ENCODE measurements at regions of chr7 and their contacts with region 1.

Region 1: DNA sequence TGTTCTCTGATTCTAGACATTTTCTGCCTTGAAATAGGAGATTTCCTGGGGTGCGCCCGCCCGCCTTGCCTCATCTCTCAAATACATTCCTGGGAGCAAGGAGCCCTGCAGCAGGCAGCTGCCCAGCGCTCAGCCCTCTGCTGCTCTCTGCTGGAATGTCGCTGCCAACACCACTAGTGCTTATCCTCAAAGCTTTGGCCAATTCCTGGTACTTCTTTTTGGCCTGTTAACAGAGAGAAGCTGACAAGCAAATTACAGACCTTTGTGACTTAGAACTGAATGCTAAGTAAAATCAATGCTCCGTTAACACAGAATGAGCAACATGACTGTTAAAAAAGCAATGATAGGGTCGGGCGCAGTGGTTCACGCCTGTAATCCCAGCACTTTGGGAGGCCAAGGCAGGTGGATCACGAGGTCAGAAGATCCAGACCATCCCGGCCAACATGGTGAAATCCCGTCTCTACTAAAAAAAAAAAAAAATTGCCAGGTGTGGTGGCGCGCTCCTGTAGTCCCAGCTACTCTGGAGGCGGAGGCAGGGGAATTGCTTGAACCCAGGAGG is 41.9 kb upstream of the SYPL1 start:
- DNase-seq: peak; percentile 79
- ATAC-seq: peak; percentile 98
- H3K4me3 Mint-ChIP-seq: no peak overlapping the region
- H3K27ac Mint-ChIP-seq: no peak overlapping the region
- H3K4me1 Mint-ChIP-seq: peaks cover 5% of the 10 kb centered on the region
- H3K27me3 Mint-ChIP-seq: peaks cover 15% of the 10 kb centered on the region
- CTCF ChIP-seq: peak; percentile 94

Region 2: DNA sequence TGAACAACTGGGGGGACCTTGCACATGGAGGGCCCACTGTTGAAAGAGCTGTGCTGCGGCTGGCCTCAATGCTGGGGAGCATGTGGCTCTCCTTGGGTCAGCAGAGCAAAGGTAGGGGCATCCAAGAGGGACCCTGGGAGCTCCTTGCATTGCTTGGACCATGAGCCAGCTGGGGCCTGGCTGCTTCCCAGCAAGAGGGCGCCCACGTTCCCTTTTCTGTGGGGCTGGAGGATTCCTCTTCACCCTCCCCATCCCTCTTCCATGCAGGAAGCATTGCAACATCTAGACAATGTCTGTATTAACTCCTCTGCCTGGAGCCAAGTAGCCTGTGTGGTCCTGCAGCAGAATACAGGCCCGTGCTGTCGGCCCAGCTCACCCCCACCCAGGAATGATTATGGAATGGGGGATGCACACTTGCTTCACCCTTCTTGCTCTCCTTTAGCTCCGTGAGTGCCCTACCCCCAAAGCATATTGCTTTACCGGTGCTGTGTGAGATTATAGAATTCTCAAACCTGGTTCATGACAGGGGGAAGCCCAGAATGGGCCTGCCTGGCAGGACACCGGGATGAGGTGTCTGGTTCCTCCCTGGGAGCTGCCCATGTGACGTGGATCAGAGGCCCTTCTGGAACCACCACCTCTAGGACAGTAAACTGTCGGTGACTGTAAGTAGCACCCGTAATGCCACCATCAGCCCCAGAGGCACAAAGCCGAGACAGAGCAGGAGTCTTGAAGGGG is 103.8 kb before region 1 on chr7:
- CTCF ChIA-PET with region 1: interaction called, 195 read pairs
- POLR2A ChIA-PET with region 1: interaction called, 3 read pairs
- intact Hi-C with region 1: no loop called
- DNase-seq: no peak
- ATAC-seq: no peak
- H3K4me3 Mint-ChIP-seq: no peak overlapping the region
- H3K27ac Mint-ChIP-seq: no peak overlapping the region
- H3K4me1 Mint-ChIP-seq: no peaks in the 10 kb centered on the region
- H3K27me3 Mint-ChIP-seq: no peaks in the 10 kb centered on the region
- CTCF ChIP-seq: no peak

Region 3: DNA sequence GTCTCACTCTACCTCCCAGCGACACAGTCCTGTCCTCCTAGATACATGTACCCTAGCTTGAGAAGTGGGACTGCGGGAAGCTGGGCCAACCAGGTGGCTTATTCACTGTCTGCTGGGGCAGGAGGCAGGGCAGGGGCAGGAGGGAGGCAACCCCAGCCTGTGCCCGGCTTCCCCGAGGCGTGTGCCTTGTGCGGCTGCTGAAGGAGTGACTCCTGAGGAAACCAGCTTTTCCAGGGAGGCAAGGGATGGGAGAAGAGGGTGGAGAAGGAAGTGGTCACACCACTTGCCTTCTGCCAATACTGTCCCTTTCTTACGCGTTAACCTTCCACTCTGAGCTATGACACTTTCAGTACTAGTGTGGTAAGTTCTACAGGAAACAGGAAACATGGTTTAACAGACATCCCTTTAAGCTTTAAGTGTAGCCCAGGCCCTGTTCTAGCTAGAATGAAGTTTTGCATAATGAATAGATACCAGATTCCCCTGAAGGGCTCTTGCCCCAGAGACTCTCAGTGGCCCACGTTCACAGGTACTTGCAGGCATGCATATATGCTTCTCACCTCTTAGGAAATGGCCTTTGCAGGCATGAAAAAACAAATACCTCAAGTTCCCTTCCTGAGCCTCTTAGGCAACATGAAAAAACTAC is 82.5 kb before region 1 on chr7:
- CTCF ChIA-PET with region 1: interaction called, 11 read pairs
- POLR2A ChIA-PET with region 1: interaction called, 3 read pairs
- intact Hi-C with region 1: no loop called
- DNase-seq: peak; percentile 76
- ATAC-seq: peak; percentile 95
- H3K4me3 Mint-ChIP-seq: peak overlapping the region; percentile 72
- H3K27ac Mint-ChIP-seq: peak overlapping the region; percentile 97
- H3K4me1 Mint-ChIP-seq: peaks cover 55% of the 10 kb centered on the region
- H3K27me3 Mint-ChIP-seq: no peaks in the 10 kb centered on the region
- CTCF ChIP-seq: no peak

Region 4: DNA sequence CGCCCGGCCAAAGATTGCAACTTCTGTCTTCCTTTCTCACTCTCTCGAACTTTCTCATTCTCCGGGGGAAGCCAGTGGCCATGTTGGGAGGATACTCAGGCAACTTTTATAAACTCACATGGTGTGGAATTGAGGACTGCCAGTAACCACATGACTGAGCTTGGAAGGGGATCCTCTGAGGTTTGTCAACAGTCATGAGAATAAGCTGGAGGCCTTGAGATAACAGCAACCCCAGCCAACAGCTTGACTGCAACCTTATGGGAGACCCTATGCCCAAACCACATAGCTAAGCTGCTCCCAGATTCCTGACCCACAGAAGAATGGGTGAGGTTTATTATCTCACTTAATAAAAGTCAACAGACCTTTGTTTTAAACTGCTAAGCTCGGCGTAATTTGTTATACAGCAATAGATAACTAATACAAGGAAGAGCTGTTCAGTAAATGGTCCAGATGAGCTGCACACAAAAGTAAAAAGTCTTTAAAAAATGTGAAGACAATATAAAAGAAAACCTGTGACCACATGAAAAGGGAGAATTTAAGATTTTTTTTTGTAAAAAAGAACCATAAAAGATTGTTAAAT is 51.5 kb before region 1 on chr7:
- CTCF ChIA-PET with region 1: interaction called, 12 read pairs
- POLR2A ChIA-PET with region 1: no interaction called
- intact Hi-C with region 1: no loop called
- DNase-seq: no peak
- ATAC-seq: no peak
- H3K4me3 Mint-ChIP-seq: no peak overlapping the region
- H3K27ac Mint-ChIP-seq: no peak overlapping the region
- H3K4me1 Mint-ChIP-seq: peaks cover 68% of the 10 kb centered on the region
- H3K27me3 Mint-ChIP-seq: no peaks in the 10 kb centered on the region
- CTCF ChIP-seq: no peak

Region 5: GRCh38 chr7:106134241-106134640 is 19.7 kb before region 1 on chr7:
- CTCF ChIA-PET with region 1: interaction called, 21 read pairs
- POLR2A ChIA-PET with region 1: no interaction called
- intact Hi-C with region 1: no loop called
- DNase-seq: no peak
- ATAC-seq: no peak
- H3K4me3 Mint-ChIP-seq: no peak overlapping the region
- H3K27ac Mint-ChIP-seq: no peak overlapping the region
- H3K4me1 Mint-ChIP-seq: no peaks in the 10 kb centered on the region
- H3K27me3 Mint-ChIP-seq: peaks cover 1% of the 10 kb centered on the region
- CTCF ChIP-seq: no peak

Region 6: GRCh38 chr7:106166655-106167342 is 12.8 kb after region 1 on chr7:
- CTCF ChIA-PET with region 1: interaction called, 114 read pairs
- POLR2A ChIA-PET with region 1: interaction called, 3 read pairs
- intact Hi-C with region 1: no loop called
- DNase-seq: peak; percentile 53
- ATAC-seq: peak; percentile 75
- H3K4me3 Mint-ChIP-seq: no peak overlapping the region
- H3K27ac Mint-ChIP-seq: no peak overlapping the region
- H3K4me1 Mint-ChIP-seq: peaks cover 2% of the 10 kb centered on the region
- H3K27me3 Mint-ChIP-seq: peaks cover 1% of the 10 kb centered on the region
- CTCF ChIP-seq: peak; percentile 97

Region 7: GRCh38 chr7:106190589-106191330 is 36.8 kb after region 1 on chr7:
- CTCF ChIA-PET with region 1: no interaction called
- POLR2A ChIA-PET with region 1: no interaction called
- intact Hi-C with region 1: no loop called
- DNase-seq: no peak
- ATAC-seq: no peak
- H3K4me3 Mint-ChIP-seq: no peak overlapping the region
- H3K27ac Mint-ChIP-seq: no peak overlapping the region
- H3K4me1 Mint-ChIP-seq: no peaks in the 10 kb centered on the region
- H3K27me3 Mint-ChIP-seq: peaks cover 16% of the 10 kb centered on the region
- CTCF ChIP-seq: no peak

Region 8: GRCh38 chr7:106339513-106340246 is 185.7 kb after region 1 on chr7:
- CTCF ChIA-PET with region 1: no interaction called
- POLR2A ChIA-PET with region 1: no interaction called
- intact Hi-C with region 1: no loop called
- DNase-seq: no peak
- ATAC-seq: peak; percentile 15
- H3K4me3 Mint-ChIP-seq: no peak overlapping the region
- H3K27ac Mint-ChIP-seq: peak overlapping the region; percentile 28
- H3K4me1 Mint-ChIP-seq: peaks cover 29% of the 10 kb centered on the region
- H3K27me3 Mint-ChIP-seq: peaks cover 11% of the 10 kb centered on the region
- CTCF ChIP-seq: no peak

Measured in activated CD8-positive, alpha-beta T cell treated with anti-CD3 and anti-CD28 coated beads for 36 hours (primary cell).